Activated T-helper 1 cell treated with anti-CD3 and anti-CD28 coated beads, Interleukin-12 subunit alpha, Interleukin-12 subunit beta, Interleukin-2, Interleukin-4 antibody, amounts not matched to agents 30 ng/mL and 10 ng/mL and 1 ng/mL, durations not matched to agents 14 hours and 24 hours and 36 hours (primary cell): ENCODE measurements at regions of chr3 and their contacts with region 1.

Region 1: DNA sequence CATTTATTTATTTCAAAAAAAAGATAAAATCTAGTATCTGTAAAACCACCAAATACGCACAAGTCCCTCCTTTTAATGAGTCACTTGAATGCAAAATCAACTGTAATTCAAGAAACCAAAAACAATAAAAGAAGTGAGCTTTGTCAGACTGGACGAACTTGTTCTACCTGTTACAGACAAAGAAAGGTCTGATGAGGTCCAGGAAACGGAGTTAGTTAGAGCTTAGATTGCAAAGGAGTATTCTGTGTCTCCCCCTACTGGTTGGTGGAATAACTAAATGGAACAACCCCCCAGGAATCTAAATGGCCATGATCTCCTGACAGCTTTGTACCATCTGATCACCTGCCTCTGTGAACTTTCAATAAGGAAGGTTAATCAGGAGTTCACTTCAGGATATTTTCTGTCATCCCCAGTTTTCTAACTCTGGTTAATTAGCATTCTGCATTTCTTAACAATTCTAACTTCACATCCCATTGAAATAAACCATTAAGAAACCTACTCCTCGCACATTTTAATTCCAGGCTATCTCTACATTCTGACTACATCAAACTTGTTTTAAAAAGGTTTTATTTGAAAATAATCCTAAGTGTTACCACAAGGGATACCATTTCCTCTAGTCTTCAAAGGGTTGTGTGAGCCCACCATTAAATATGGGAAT is 333.0 kb upstream of the SATB1 start:
- DNase-seq: peak; percentile 50
- H3K4me3 Mint-ChIP-seq: no peak overlapping the region
- H3K27ac Mint-ChIP-seq: peak overlapping the region; percentile 73
- H3K4me1 Mint-ChIP-seq: peaks cover 50% of the 10 kb centered on the region
- H3K27me3 Mint-ChIP-seq: no peaks in the 10 kb centered on the region

Region 2: GRCh38 chr3:17820704-17821103 is 937.5 kb before region 1 on chr3:
- intact Hi-C with region 1: no loop called
- DNase-seq: no peak
- H3K4me3 Mint-ChIP-seq: no peak overlapping the region
- H3K27ac Mint-ChIP-seq: no peak overlapping the region
- H3K4me1 Mint-ChIP-seq: no peaks in the 10 kb centered on the region
- H3K27me3 Mint-ChIP-seq: peaks cover 3% of the 10 kb centered on the region

Region 3: DNA sequence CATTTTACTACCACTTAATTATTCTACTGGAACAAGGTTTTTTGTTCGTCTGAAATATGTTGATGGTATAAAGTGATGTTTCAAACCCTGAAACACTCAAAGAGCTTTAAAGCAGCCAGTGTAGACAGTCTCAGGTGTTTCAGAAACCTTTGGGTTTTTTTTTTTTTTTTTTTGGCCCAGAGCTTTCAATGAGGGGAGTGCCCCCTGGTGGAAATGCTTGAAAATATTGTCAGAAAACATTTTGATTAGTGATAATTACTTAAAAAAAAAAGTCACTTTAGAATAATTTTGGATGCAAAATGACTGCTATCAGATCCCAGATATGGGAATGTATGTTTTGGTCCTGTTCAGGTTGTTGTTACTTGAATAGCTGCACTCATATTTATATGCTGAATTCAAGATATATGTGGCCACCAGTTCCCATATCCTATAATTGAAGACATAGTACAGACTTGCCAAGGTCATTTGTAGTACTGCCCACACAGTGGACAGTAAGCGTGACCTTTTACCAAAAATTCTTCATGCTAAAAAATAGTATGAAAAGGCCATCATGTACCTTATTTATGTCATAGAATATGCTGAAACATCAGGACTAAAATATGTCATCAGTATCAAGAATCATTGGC is 369.0 kb before region 1 on chr3:
- intact Hi-C with region 1: loop called (anchors 1 kb)
- DNase-seq: no peak
- H3K4me3 Mint-ChIP-seq: no peak overlapping the region
- H3K27ac Mint-ChIP-seq: no peak overlapping the region
- H3K4me1 Mint-ChIP-seq: peaks cover 81% of the 10 kb centered on the region
- H3K27me3 Mint-ChIP-seq: no peaks in the 10 kb centered on the region

Region 4: DNA sequence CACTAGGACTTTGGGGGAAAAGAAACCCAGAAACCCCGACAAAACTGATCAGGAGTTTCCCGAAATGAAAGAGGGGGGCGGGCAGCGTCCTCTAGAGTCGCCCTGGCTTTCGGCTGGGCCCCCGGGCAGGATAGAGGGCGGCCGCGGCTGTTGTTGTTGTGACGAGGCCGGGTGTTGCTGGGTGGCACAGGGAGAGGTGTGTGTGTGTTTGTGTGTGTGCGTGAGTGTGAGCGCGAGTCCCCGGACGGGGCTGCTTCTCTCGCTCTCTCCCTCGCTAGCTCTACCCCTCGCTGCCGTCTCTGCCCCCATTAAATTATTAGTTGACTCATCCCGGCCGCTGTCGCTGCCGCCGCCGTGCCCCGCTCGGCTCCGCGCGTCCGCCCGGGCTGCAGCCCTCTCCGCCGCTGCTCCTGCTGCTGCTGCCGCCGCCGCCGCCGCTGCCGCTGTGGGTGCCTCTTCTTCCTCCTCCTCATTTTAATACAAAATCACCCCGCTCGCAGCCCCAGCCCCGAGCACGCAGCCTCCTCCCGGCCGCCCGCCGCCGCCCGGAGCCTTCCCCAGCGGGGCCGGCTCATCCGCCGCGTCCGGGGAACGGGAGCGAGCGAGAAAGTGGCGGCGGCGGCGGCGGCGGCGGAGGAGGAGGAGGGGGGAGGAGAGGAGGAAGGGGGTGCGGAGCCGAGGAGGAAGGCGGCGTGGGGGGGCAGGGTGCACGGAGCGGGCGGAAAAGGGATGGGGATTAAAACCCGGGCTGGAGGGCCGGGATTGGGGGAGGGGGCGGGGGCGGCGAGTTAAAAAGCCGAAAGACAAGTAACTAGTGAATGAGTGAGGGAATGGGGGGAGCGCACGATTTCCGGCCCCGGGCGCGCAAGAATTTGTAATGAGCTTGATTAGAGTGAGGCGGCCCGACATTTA is 333.2 kb before region 1 on chr3 and contains the start of gene SATB1:
- intact Hi-C with region 1: loop called (anchors 1 kb)
- DNase-seq: peak; percentile 54
- H3K4me3 Mint-ChIP-seq: peak within 1 kb of the TSS; percentile 91
- H3K27ac Mint-ChIP-seq: peak within 1 kb of the TSS; percentile 94
- H3K4me1 Mint-ChIP-seq: peaks cover 72% of the 10 kb centered on the region
- H3K27me3 Mint-ChIP-seq: peaks cover 6% of the 10 kb centered on the region
- total RNA-seq, gene SATB1: 679 and 686 TPM in 2 replicates

Region 5: GRCh38 chr3:18531662-18532236 is 226.4 kb before region 1 on chr3:
- intact Hi-C with region 1: no loop called
- DNase-seq: no peak
- H3K4me3 Mint-ChIP-seq: no peak overlapping the region
- H3K27ac Mint-ChIP-seq: peak overlapping the region; percentile 10
- H3K4me1 Mint-ChIP-seq: peaks cover 21% of the 10 kb centered on the region
- H3K27me3 Mint-ChIP-seq: no peaks in the 10 kb centered on the region

Region 6: DNA sequence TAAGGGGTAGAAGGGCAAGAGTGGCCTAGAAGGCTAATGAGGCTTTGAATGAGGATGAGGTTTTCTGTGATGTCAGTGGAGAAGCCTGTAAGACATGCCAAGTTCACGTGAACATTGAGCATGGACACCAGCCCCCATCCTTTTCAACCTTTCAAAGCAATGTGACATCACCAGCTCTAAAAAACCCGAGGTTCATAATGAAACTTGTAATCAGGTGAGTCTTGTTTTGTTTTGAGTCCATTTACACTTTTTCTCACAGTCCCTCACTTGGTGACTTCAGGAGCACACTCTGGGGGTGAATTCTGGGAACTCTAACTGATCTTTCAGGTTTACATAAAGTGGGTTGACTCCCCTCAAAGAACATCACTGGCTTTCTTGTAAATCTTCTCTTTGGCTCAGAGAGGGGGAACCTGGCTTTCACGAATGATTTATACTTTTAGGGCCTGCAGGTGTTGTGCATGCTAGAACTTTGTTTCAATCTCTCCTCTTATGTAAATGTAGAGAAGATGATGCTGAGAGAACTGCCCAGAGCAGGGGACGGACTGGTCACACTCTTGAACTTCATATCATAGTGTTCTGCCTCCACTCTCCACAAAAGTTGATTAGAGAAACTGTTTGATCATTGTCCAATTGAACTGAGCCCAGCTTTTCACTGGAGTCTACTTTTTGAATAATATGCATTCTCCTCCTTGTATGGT is 108.4 kb before region 1 on chr3:
- intact Hi-C with region 1: loop called (anchors 1 kb)
- DNase-seq: peak; percentile 70
- H3K4me3 Mint-ChIP-seq: peak overlapping the region; percentile 59
- H3K27ac Mint-ChIP-seq: peak overlapping the region; percentile 94
- H3K4me1 Mint-ChIP-seq: peaks cover 94% of the 10 kb centered on the region
- H3K27me3 Mint-ChIP-seq: no peaks in the 10 kb centered on the region

Region 7: GRCh38 chr3:18679238-18679637 is 78.9 kb before region 1 on chr3:
- intact Hi-C with region 1: loop called (anchors 1 kb)
- DNase-seq: peak; percentile 62
- H3K4me3 Mint-ChIP-seq: peak overlapping the region; percentile 19
- H3K27ac Mint-ChIP-seq: peak overlapping the region; percentile 77
- H3K4me1 Mint-ChIP-seq: peaks cover 89% of the 10 kb centered on the region
- H3K27me3 Mint-ChIP-seq: no peaks in the 10 kb centered on the region

Region 8: DNA sequence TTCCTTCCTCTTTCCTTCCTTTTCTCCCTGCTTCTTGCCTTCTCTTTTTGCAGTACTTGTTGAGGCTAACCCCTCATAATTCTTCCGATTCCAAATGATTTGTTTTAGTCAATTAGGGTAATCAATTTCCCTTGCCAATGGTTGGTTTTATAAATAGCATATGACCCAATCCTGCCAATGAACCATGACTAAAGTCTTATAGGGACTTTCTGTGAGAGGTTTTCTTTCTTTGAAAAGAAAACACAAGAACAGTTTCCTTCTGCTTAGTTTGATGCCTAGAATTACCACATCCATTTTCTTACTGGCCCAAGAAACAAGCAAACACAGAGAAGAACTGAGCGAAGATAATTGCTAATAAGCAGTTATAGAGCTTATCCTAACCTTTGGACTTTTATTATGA is 40.6 kb before region 1 on chr3:
- intact Hi-C with region 1: loop called (anchors 1 kb)
- DNase-seq: no peak
- H3K4me3 Mint-ChIP-seq: peak overlapping the region; percentile 64
- H3K27ac Mint-ChIP-seq: peak overlapping the region; percentile 98
- H3K4me1 Mint-ChIP-seq: peaks cover 67% of the 10 kb centered on the region
- H3K27me3 Mint-ChIP-seq: no peaks in the 10 kb centered on the region

Region 9: GRCh38 chr3:18725668-18726407 is 32.3 kb before region 1 on chr3:
- intact Hi-C with region 1: loop called (anchors 1 kb)
- DNase-seq: peak; percentile 31
- H3K4me3 Mint-ChIP-seq: peak overlapping the region; percentile 82
- H3K27ac Mint-ChIP-seq: peak overlapping the region; percentile 98
- H3K4me1 Mint-ChIP-seq: peaks cover 71% of the 10 kb centered on the region
- H3K27me3 Mint-ChIP-seq: no peaks in the 10 kb centered on the region

Region 10: DNA sequence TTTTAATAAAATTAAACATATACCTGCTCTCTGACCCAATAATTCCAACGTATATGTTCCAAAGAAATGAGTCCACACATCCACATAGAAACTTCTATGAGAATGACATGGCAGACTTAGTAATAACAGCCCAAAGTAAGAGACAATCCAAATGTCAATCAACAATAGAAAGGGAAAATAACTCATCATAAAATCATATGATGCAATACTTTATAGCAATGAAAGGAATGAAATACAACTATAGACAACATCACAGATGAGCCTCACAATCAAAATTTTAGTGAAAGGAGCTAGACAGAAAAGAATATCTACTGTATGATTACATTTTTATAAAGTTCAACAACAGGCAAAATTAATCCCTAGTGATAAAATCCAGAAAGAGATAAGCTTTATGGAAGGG is 366.6 kb after region 1 on chr3:
- intact Hi-C with region 1: no loop called
- DNase-seq: no peak
- H3K4me3 Mint-ChIP-seq: no peak overlapping the region
- H3K27ac Mint-ChIP-seq: no peak overlapping the region
- H3K4me1 Mint-ChIP-seq: no peaks in the 10 kb centered on the region
- H3K27me3 Mint-ChIP-seq: no peaks in the 10 kb centered on the region